Common myeloid progenitor, CD34-positive (primary cell): ENCODE measurements at regions of chr9 and their contacts with region 1.

Region 1: GRCh38 chr9:121340676-121341392 is 29.2 kb downstream of the STOM start:
- DNase-seq: no peak
- H3K4me3 ChIP-seq: no peak overlapping the region
- H3K27ac ChIP-seq: no peak overlapping the region
- H3K4me1 ChIP-seq: no peaks in the 10 kb centered on the region
- H3K27me3 ChIP-seq: no peaks in the 10 kb centered on the region

Region 2: GRCh38 chr9:121350993-121351561 is 10.2 kb after region 1 on chr9:
- CTCF ChIA-PET with region 1: interaction called, 31 read pairs
- POLR2A ChIA-PET with region 1: interaction called, 3 read pairs
- DNase-seq: peak; percentile 76 to 88 (median 88)
- H3K4me3 ChIP-seq: peak overlapping the region in 3 of 7 experiments; percentile 15 to 55 (median 32)
- H3K27ac ChIP-seq: peak overlapping the region in 1 of 2 experiments; percentile 57
- H3K4me1 ChIP-seq: peaks cover 3 to 52% (median 24%) of the 10 kb centered on the region in 4 experiments
- H3K27me3 ChIP-seq: no peaks in the 10 kb centered on the region